Right ventricle myocardium superior (tissue), 1 donor: ENCODE measurements at regions of chr1 and their contacts with region 1.

Region 1: GRCh38 chr1:19101244-19101643 is 108.8 kb downstream of the UBR4 start:
- DNase-seq: no peak
- ATAC-seq: no peak

Region 2: DNA sequence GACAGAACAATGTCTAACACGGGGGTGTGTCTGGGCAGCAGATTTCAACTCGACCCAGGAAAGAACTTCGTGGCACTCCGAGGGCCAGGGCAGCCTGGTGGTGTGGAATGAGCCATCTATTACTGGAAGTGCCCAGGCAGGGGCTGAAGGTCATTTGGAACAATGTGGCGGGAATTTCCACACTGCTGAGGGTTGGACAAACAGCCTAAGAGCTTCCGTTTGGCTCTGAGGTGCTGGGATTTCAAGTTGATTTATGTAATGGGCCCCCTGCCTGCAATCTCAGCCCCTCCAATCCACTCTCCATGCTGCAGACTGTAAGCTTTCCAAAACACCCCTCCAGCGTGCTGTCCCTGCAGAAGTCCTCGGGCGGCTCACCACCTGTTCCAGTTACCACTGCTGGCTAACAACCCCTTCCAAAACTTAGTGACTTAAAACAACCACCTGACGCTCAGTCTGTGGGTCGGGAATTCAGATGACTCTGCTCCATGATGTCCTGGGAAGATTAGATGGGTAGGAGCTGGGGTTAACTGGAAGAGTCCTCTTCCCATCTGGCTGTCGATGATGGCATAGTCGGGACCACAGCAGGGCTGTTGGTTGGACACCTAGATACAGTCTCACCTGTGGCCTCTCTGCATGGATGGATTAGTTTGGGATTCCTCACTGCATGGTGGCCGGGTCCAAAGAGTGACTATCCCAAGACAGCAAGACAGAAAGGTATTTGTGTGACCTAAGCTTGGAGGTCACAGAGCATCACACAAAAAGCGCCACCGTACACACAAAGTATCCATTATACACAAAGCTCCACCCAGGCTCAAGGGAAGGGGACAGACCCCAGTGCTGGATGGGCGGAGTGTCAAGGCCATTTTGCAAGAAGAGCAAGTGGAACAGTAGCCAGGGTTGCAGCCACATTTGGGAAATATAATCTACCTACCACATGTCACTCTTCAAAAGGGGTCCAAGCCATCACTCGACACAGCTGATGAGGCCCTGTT is 55.0 kb before region 1 on chr1:
- intact Hi-C with region 1: no loop called
- DNase-seq: no peak
- ATAC-seq: no peak

Region 3: GRCh38 chr1:19169642-19170041 is 68.4 kb after region 1 on chr1:
- intact Hi-C with region 1: loop called (anchors 10 kb)
- DNase-seq: no peak
- ATAC-seq: no peak